Activated CD8-positive, alpha-beta memory T cell treated with anti-CD3 and anti-CD28 coated beads, Interleukin-2, amount 10 ng/mL, durations not matched to agents 7 days and 5 days (primary cell): ENCODE measurements at regions of chr2 and their contacts with region 1.

Region 1: GRCh38 chr2:25851740-25852503 is 26.4 kb downstream of the ASXL2 start:
- DNase-seq: peak; percentile 50
- ATAC-seq: peak; percentile 91
- H3K4me3 Mint-ChIP-seq: peak overlapping the region; percentile 71
- H3K27ac Mint-ChIP-seq: peak overlapping the region; percentile 90
- H3K4me1 Mint-ChIP-seq: peaks cover 39% of the 10 kb centered on the region
- H3K27me3 Mint-ChIP-seq: no peaks in the 10 kb centered on the region

Region 2: DNA sequence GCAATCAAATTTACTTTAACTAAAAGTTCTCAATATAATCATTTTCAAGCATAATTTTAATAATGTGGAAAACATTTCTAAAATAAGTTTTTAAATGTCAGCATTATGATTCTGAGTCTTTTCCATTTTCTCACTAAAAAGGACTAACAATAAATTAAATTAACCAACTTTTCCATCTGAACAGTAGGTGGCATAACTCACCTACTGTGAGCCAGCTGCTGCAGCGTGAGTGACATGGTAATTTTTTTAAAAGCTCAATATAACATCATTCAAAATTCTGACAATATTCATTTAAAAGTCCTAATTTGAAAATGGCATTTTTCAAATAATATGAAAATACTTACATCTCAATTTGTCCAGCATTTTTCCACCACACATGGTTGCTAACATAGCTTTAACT is 245.0 kb before region 1 on chr2:
- CTCF ChIA-PET with region 1: interaction called, 20 read pairs
- DNase-seq: no peak
- ATAC-seq: no peak
- H3K4me3 Mint-ChIP-seq: no peak overlapping the region
- H3K27ac Mint-ChIP-seq: no peak overlapping the region
- H3K4me1 Mint-ChIP-seq: peaks cover 20% of the 10 kb centered on the region
- H3K27me3 Mint-ChIP-seq: no peaks in the 10 kb centered on the region

Region 3: DNA sequence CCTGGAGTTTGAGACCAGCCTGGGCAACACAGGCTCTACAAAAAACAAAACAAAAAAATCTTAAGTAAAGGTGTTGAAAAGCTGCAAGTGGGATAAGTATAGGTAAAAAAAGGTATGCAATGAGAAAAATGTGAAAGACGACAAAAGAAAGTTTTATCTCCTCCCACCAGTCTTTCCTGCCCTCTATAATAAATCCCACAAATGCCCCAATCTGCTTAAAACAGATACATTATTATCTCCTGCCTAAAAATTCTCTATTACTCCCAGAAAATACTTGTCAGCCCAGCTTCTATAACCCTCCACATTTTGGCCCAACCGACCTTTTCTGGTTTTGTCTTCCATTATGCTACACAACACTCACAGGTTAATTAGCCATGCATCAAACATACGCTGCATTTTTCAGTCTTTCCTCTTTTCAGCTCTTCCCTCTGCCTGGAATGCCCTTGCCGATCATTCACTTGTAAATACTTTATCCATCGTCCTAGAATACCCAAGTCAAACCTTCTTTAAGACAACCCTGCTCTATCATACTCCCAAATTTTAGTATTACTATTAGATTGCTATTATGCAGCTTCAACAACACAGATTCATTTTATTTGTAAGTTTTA is 15.6 kb after region 1 on chr2:
- CTCF ChIA-PET with region 1: interaction called, 14 read pairs
- DNase-seq: no peak
- ATAC-seq: no peak
- H3K4me3 Mint-ChIP-seq: no peak overlapping the region
- H3K27ac Mint-ChIP-seq: peak overlapping the region; percentile 2
- H3K4me1 Mint-ChIP-seq: peaks cover 7% of the 10 kb centered on the region
- H3K27me3 Mint-ChIP-seq: no peaks in the 10 kb centered on the region

Region 4: DNA sequence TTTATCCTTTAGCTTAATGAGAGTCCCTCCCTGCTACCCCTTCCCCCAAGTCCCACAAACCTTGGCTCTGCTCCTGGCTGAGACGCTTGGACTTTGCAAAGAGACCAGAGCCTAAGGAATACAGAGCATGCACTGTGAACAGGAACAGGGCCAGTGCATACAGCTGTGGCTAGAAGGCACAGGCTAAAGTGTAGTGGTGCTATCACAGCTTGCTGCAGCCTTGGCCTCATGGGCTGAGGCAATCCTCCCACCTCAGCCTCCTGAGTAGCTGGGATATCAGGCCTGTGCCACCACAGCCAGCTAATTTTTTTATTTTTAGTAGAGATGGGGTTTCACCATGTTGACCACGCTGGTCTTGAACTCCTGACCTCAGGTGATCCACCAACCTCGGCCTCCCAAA is 65.9 kb after region 1 on chr2:
- CTCF ChIA-PET with region 1: interaction called, 12 read pairs
- DNase-seq: no peak
- ATAC-seq: no peak
- H3K4me3 Mint-ChIP-seq: no peak overlapping the region
- H3K27ac Mint-ChIP-seq: no peak overlapping the region
- H3K4me1 Mint-ChIP-seq: peaks cover 12% of the 10 kb centered on the region
- H3K27me3 Mint-ChIP-seq: peaks cover 6% of the 10 kb centered on the region

Region 5: GRCh38 chr2:25991965-25992364 is 140.0 kb after region 1 on chr2:
- CTCF ChIA-PET with region 1: interaction called, 11 read pairs
- DNase-seq: no peak
- ATAC-seq: no peak
- H3K4me3 Mint-ChIP-seq: no peak overlapping the region
- H3K27ac Mint-ChIP-seq: no peak overlapping the region
- H3K4me1 Mint-ChIP-seq: peaks cover 27% of the 10 kb centered on the region
- H3K27me3 Mint-ChIP-seq: peaks cover 7% of the 10 kb centered on the region

Region 6: DNA sequence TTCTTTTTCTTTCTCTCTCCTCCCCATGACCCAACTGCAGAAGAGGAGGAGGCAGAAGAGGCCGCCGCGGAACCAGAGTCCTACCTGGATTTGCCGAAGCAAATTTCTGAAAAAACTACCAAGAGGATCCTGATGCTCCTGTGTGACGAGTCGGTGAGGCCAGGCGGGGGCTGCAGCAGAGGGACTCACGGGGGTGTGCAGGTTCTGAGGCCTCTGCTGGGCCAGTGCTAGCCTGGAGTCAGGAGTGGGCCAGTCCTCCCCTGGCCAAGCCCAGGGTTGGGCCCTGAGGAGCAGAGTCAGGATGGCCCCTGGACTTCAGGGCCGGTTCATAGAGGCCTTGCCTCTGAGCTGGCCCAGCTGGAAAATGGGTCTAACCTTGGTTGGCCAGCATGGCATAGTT is 596.7 kb after region 1 on chr2:
- CTCF ChIA-PET with region 1: no interaction called
- DNase-seq: peak; percentile 37
- ATAC-seq: no peak
- H3K4me3 Mint-ChIP-seq: no peak overlapping the region
- H3K27ac Mint-ChIP-seq: no peak overlapping the region
- H3K4me1 Mint-ChIP-seq: no peaks in the 10 kb centered on the region
- H3K27me3 Mint-ChIP-seq: peaks cover 17% of the 10 kb centered on the region